ENCODE measurements at regions of chr6 and their contacts with region 1.

Region 1: GRCh38 chr6:37018198-37019064 is 13.0 kb downstream of the FGD2 start:
- DNase-seq: peak; percentile 97
- H3K4me3 Mint-ChIP-seq: no peak overlapping the region
- H3K27ac Mint-ChIP-seq: peak overlapping the region; percentile 26
- H3K4me1 Mint-ChIP-seq: peaks cover 38% of the 10 kb centered on the region
- H3K27me3 Mint-ChIP-seq: no peaks in the 10 kb centered on the region

Region 2: GRCh38 chr6:36368921-36369865 is 649.2 kb before region 1 on chr6:
- CTCF ChIA-PET with region 1: no interaction called
- intact Hi-C with region 1: no loop called
- DNase-seq: no peak
- H3K4me3 Mint-ChIP-seq: no peak overlapping the region
- H3K27ac Mint-ChIP-seq: no peak overlapping the region
- H3K4me1 Mint-ChIP-seq: no peaks in the 10 kb centered on the region
- H3K27me3 Mint-ChIP-seq: no peaks in the 10 kb centered on the region

Region 3: GRCh38 chr6:36666726-36667591 is 351.5 kb before region 1 on chr6:
- CTCF ChIA-PET with region 1: no interaction called
- intact Hi-C with region 1: no loop called
- DNase-seq: no peak
- H3K4me3 Mint-ChIP-seq: no peak overlapping the region
- H3K27ac Mint-ChIP-seq: no peak overlapping the region
- H3K4me1 Mint-ChIP-seq: peaks cover 20% of the 10 kb centered on the region
- H3K27me3 Mint-ChIP-seq: no peaks in the 10 kb centered on the region

Region 4: GRCh38 chr6:36765594-36766398 is 252.6 kb before region 1 on chr6:
- CTCF ChIA-PET with region 1: interaction called, 94 read pairs
- intact Hi-C with region 1: loop called (anchors 1 kb)
- DNase-seq: peak; percentile 91
- H3K4me3 Mint-ChIP-seq: no peak overlapping the region
- H3K27ac Mint-ChIP-seq: no peak overlapping the region
- H3K4me1 Mint-ChIP-seq: peaks cover 27% of the 10 kb centered on the region
- H3K27me3 Mint-ChIP-seq: no peaks in the 10 kb centered on the region

Region 5: DNA sequence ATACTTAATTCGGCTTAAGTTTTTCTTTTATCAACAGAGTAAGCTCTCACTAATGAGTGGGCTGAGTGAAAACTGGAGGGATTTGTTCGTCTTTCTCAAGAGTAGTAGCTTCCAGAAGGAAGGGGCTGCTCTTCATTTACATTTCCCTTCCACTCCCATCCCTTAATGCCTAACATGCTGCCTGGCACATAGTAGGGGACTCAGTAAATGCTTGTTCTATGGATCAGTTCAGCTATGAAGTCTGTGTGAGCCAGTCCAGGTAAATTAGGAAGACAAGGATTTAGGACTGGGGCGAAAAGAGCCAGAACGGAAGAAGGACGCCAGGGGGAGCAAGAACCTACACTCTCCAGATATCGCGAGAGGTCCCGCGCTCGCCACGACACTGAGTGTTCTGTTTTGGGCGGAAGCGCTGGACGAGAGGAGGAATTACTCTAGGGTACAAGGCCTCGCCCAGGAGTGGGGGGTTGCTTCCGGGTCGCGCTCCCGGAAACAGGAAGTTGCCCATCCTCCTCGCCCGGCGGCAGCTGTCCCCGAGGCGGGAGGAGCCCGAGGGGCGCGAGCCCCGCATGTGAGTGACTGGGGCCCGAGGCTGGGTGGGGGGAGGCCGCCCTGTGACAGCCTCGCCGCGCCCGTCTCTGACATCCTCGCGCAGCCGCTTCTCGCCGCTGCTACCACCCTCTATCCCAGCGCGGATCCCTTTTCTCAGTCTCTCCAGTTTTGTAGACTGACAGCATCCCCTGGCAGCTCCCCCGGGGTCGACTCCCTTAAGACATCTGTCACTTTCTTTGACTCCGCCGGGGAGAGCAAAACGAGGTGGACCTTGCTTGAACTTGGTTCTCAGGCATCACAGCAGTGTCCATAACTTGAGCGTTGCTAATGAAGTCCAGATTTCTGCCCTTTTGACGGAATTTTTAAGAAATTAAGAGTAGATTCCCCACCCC is 132.7 kb before region 1 on chr6 and contains the start of gene C6orf89:
- CTCF ChIA-PET with region 1: interaction called, 82 read pairs
- intact Hi-C with region 1: loop called (anchors 1 kb)
- DNase-seq: peak; percentile 99
- H3K4me3 Mint-ChIP-seq: peak within 1 kb of the TSS; percentile 87
- H3K27ac Mint-ChIP-seq: peak within 1 kb of the TSS; percentile 92
- H3K4me1 Mint-ChIP-seq: peaks cover 33% of the 10 kb centered on the region
- H3K27me3 Mint-ChIP-seq: no peaks in the 10 kb centered on the region
- total RNA-seq, gene C6orf89: 24.2 to 24.5 TPM

Region 6: GRCh38 chr6:37005061-37005810 is 13.2 kb before region 1 on chr6 and contains the start of gene FGD2:
- CTCF ChIA-PET with region 1: interaction called, 35 read pairs
- intact Hi-C with region 1: no loop called
- DNase-seq: no peak
- H3K4me3 Mint-ChIP-seq: no peak within 1 kb of the TSS
- H3K27ac Mint-ChIP-seq: peak within 1 kb of the TSS; percentile 54
- H3K4me1 Mint-ChIP-seq: peaks cover 10% of the 10 kb centered on the region
- H3K27me3 Mint-ChIP-seq: no peaks in the 10 kb centered on the region
- total RNA-seq, gene FGD2: 0.25 to 0.48 TPM

Region 7: DNA sequence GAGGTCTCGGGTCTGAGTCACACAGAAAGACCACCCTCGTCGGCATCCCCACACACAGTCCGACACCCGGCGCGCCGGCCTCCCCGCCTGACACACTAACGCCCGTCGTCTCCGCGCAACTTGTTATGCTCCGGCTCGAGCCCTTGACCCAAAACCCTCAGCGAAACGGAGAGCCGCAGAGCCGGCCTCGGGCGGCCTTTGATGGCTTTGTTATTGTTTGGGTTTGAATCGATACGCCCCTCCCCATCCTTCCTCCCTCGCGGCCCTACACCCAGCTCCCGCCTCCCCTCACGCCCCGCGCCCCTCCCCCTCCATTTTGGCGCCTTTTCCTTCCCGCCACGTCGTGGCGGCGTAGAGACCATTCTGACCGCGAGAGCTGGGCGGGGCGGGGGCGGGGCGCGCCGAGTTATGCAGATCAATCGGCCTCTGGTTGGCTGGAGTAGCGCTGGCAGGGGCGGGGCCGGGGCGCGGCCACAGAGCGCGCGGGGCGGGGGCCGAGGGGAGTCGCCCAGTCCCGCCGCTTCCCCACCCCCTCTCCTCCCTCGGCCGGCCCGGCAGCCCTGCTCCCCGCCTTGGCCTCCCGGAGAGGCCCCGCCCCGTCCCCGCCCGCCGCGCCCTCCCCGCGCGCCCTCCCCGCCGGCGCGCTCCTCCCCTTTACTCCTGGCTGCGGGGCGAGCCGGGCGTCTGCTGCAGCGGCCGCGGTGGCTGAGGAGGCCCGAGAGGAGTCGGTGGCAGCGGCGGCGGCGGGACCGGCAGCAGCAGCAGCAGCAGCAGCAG is 151.3 kb after region 1 on chr6 and contains the start of gene PIM1:
- CTCF ChIA-PET with region 1: interaction called, 265 read pairs
- intact Hi-C with region 1: loop called (anchors 1 kb)
- DNase-seq: peak; percentile 100
- H3K4me3 Mint-ChIP-seq: peak within 1 kb of the TSS; percentile 93
- H3K27ac Mint-ChIP-seq: peak within 1 kb of the TSS; percentile 96
- H3K4me1 Mint-ChIP-seq: peaks cover 34% of the 10 kb centered on the region
- H3K27me3 Mint-ChIP-seq: no peaks in the 10 kb centered on the region
- total RNA-seq, gene PIM1: 226 to 227 TPM

Region 8: GRCh38 chr6:37432916-37433656 is 414.7 kb after region 1 on chr6 and contains the start of gene CMTR1:
- CTCF ChIA-PET with region 1: no interaction called
- intact Hi-C with region 1: loop called (anchors 5 kb)
- DNase-seq: peak; percentile 97
- H3K4me3 Mint-ChIP-seq: peak within 1 kb of the TSS; percentile 97
- H3K27ac Mint-ChIP-seq: peak within 1 kb of the TSS; percentile 97
- H3K4me1 Mint-ChIP-seq: peaks cover 36% of the 10 kb centered on the region
- H3K27me3 Mint-ChIP-seq: no peaks in the 10 kb centered on the region
- total RNA-seq, gene CMTR1: 70.9 to 71.3 TPM